ENCODE measurements at regions of chr11 and their contacts with region 1.

Region 1: GRCh38 chr11:83193315-83194280 is at the start of gene ANKRD42:
- DNase-seq: peak; percentile 96
- H3K4me3 Mint-ChIP-seq: peak within 1 kb of the TSS; percentile 95
- H3K27ac Mint-ChIP-seq: peak within 1 kb of the TSS; percentile 90
- H3K4me1 Mint-ChIP-seq: peaks cover 33% of the 10 kb centered on the region
- H3K27me3 Mint-ChIP-seq: no peaks in the 10 kb centered on the region
- total RNA-seq, gene ANKRD42: 4.0 and 4.1 TPM in 2 replicates

Region 2: GRCh38 chr11:83285771-83286528 is 92.4 kb after region 1 on chr11 and contains the start of gene CCDC90B:
- intact Hi-C with region 1: loop called (anchors 1 kb)
- DNase-seq: peak; percentile 97
- H3K4me3 Mint-ChIP-seq: peak within 1 kb of the TSS; percentile 99
- H3K27ac Mint-ChIP-seq: peak within 1 kb of the TSS; percentile 99
- H3K4me1 Mint-ChIP-seq: peaks cover 20% of the 10 kb centered on the region
- H3K27me3 Mint-ChIP-seq: peaks cover 11% of the 10 kb centered on the region
- total RNA-seq, gene CCDC90B: 24.1 and 24.7 TPM in 2 replicates